HCT116 (cell line): ENCODE measurements at regions of chr18 and their contacts with region 1.

Region 1: GRCh38 chr18:36757081-36757480 is 71.7 kb downstream of the TPGS2 start:
- DNase-seq: peak; percentile 44
- ATAC-seq: peak; percentile 85
- H3K4me3 ChIP-seq: no peak overlapping the region
- H3K27ac ChIP-seq: no peak overlapping the region
- H3K4me1 ChIP-seq: no peaks in the 10 kb centered on the region; a peak in 1 of 4 replicates
- H3K27me3 ChIP-seq: no peaks in the 10 kb centered on the region
- CTCF ChIP-seq: peak; percentile 56 to 71 (median 67)
- POLR2A ChIP-seq: no peak
- RAD21 ChIP-seq: peak; percentile 83

Region 2: DNA sequence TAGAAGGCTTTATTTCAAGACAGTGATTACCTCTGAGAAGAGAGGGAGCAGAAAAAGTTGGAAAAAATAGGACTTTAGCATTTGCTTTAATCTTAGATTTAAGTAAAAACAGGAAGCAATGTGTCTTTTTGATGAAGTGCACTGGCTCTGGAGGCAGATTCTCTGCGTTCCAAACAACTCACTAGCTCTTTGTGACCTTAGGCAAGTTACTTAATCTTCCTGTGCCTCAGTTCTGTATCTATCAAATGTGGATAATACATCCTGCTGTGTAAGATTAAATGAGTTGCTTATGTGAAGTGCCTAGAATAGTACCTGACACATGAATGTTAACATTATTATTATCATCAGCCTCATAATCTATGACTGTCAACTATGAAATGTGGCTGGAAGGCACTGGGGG is 732.1 kb before region 1 on chr18:
- CTCF ChIA-PET with region 1: no interaction called
- POLR2A ChIA-PET with region 1: no interaction called
- RAD21 ChIA-PET with region 1: no interaction called
- intact Hi-C with region 1: loop called (anchors 10 kb)
- DNase-seq: no peak
- ATAC-seq: no peak
- H3K4me3 ChIP-seq: no peak overlapping the region
- H3K27ac ChIP-seq: no peak overlapping the region
- H3K4me1 ChIP-seq: 0 out of 4 replicates have a peak, but pooled peaks cover 0 to 8% of the 10 kb centered on the region in 2 experiments
- H3K27me3 ChIP-seq: no peaks in the 10 kb centered on the region
- CTCF ChIP-seq: no peak
- POLR2A ChIP-seq: no peak
- RAD21 ChIP-seq: no peak

Region 3: GRCh38 chr18:36284671-36285295 is 472.3 kb before region 1 on chr18:
- CTCF ChIA-PET with region 1: no interaction called
- POLR2A ChIA-PET with region 1: no interaction called
- RAD21 ChIA-PET with region 1: no interaction called
- intact Hi-C with region 1: loop called (anchors 1 kb)
- DNase-seq: peak; percentile 60
- ATAC-seq: peak; percentile 74
- H3K4me3 ChIP-seq: no peak overlapping the region
- H3K27ac ChIP-seq: no peak overlapping the region
- H3K4me1 ChIP-seq: no peaks in the 10 kb centered on the region
- H3K27me3 ChIP-seq: 0 out of 2 replicates have a peak, but pooled peaks cover 2% of the 10 kb centered on the region
- CTCF ChIP-seq: peak; percentile 70 to 94 (median 89)
- POLR2A ChIP-seq: no peak
- RAD21 ChIP-seq: peak; percentile 94

Region 4: DNA sequence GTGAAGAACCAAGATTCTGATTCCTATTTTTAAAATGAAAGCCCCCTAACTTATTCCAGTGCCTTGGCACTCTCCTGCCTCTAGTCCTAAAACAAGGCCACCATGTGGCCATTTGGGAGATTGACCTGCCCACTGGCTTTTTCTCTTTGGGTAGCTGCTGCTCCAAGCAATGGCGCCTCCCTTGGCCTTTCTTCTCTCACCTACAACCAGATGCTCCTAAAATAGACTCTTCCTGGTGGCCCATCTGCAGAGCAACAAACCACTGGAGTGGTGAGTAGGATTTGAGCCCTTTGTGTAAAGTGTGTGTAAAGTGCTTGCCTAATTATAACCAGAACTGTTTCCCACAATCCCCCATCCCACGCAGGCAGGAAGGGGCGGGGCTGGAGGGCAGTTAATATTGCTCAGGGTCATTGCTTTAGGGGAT is 345.3 kb before region 1 on chr18:
- CTCF ChIA-PET with region 1: no interaction called
- POLR2A ChIA-PET with region 1: no interaction called
- RAD21 ChIA-PET with region 1: no interaction called
- intact Hi-C with region 1: loop called (anchors 2 kb)
- DNase-seq: peak; percentile 50
- ATAC-seq: peak; percentile 87
- H3K4me3 ChIP-seq: no peak overlapping the region
- H3K27ac ChIP-seq: no peak overlapping the region
- H3K4me1 ChIP-seq: 0 out of 4 replicates have a peak, but pooled peaks cover 0 to 4% of the 10 kb centered on the region in 2 experiments
- H3K27me3 ChIP-seq: no peaks in the 10 kb centered on the region
- CTCF ChIP-seq: peak; percentile 67 to 82 (median 69); a peak in 5 of 6 replicates
- POLR2A ChIP-seq: no peak
- RAD21 ChIP-seq: peak; percentile 55; the same call in 1 of the 2 replicates

Region 5: GRCh38 chr18:36688020-36688965 is 68.8 kb before region 1 on chr18:
- CTCF ChIA-PET with region 1: interaction called, 6 read pairs
- POLR2A ChIA-PET with region 1: no interaction called
- RAD21 ChIA-PET with region 1: interaction called in 1 of 2 experiments, 3 read pairs
- intact Hi-C with region 1: loop called (anchors 1 kb)
- DNase-seq: peak; percentile 52
- ATAC-seq: peak; percentile 76
- H3K4me3 ChIP-seq: no peak overlapping the region
- H3K27ac ChIP-seq: no peak overlapping the region
- H3K4me1 ChIP-seq: no peaks in the 10 kb centered on the region
- H3K27me3 ChIP-seq: no peaks in the 10 kb centered on the region
- CTCF ChIP-seq: peak; percentile 68 to 95 (median 93)
- POLR2A ChIP-seq: no peak
- RAD21 ChIP-seq: peak; percentile 62

Region 6: DNA sequence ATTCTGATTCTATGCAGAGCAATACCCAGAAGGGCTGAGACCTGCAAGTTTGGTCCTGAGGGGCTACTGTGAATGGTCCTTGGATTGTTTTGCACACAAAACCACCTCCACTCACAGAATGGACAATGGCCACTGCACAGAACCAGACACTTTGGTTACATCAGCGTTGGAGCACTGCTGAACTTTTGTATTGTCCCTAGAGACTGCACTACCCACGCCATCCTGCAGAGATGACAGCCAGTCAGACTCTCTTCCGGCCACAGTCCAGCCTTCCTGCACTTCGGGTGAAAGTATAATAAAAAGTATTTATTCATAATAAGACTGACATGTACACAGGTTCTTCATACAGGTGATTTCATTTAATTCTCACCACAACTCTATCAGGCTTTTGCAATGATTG is 772.8 kb after region 1 on chr18:
- CTCF ChIA-PET with region 1: no interaction called
- POLR2A ChIA-PET with region 1: no interaction called
- RAD21 ChIA-PET with region 1: no interaction called
- intact Hi-C with region 1: no loop called
- DNase-seq: no peak
- ATAC-seq: peak; percentile 62
- H3K4me3 ChIP-seq: no peak overlapping the region
- H3K27ac ChIP-seq: no peak overlapping the region
- H3K4me1 ChIP-seq: no peaks in the 10 kb centered on the region
- H3K27me3 ChIP-seq: peaks cover 59% of the 10 kb centered on the region
- CTCF ChIP-seq: no peak
- POLR2A ChIP-seq: no peak
- RAD21 ChIP-seq: no peak